Activated B cell treated with CpG ODN at 0.5 μM for 24 hours (primary cell): ENCODE measurements at regions of chr1 and their contacts with region 1.

Region 1: DNA sequence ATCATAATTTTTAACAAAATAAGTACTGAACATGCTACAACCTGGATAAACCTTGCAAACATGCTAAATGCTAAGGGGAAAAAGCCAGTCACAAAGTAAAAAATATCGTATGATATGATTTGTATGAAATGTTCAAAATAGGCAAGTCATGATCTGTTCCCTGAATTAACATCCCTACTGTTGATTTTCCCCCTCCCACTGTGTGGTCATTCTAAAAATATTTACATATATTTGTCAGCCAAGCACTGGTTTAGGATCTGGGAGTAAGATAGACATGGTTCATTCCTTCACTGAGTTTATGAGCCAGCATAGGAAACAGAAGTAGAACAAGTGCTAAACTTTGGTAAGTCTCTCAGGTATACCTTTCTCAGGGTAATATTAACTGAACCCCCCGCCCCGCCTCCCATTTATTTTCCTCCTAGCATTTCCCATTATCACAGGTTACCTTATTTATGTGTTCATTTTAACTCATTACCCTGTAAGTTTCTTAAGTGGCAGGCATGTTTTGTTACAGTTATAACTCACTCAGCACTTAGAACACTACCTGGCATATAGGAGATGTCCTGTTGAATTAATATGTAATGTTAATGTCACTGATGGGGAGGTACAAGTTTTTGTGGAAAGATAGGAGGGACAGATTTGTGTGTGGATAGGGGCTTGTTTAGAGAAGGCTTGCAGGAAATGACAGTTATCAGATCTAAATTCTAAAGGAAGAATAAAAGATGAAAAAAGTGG is 12.3 kb downstream of the UQCRH start:
- DNase-seq: no peak
- ATAC-seq: no peak
- H3K4me3 Mint-ChIP-seq: no peak overlapping the region
- H3K27ac Mint-ChIP-seq: no peak overlapping the region
- H3K4me1 Mint-ChIP-seq: peaks cover 2% of the 10 kb centered on the region
- H3K27me3 Mint-ChIP-seq: no peaks in the 10 kb centered on the region
- CTCF ChIP-seq: no peak

Region 2: GRCh38 chr1:46340404-46341221 is 24.8 kb after region 1 on chr1 and contains the start of gene NSUN4:
- CTCF ChIA-PET with region 1: no interaction called
- POLR2A ChIA-PET with region 1: interaction called, 17 read pairs
- intact Hi-C with region 1: no loop called
- DNase-seq: peak; percentile 69
- ATAC-seq: peak; percentile 81
- H3K4me3 Mint-ChIP-seq: peak within 1 kb of the TSS; percentile 99
- H3K27ac Mint-ChIP-seq: peak within 1 kb of the TSS; percentile 98
- H3K4me1 Mint-ChIP-seq: peaks cover 33% of the 10 kb centered on the region
- H3K27me3 Mint-ChIP-seq: no peaks in the 10 kb centered on the region
- CTCF ChIP-seq: peak; percentile 50
- total RNA-seq, gene NSUN4: 35.3 and 38.6 TPM in 2 replicates